AG04450 (cell line): ENCODE measurements at regions of chr1 and their contacts with region 1.

Region 1: DNA sequence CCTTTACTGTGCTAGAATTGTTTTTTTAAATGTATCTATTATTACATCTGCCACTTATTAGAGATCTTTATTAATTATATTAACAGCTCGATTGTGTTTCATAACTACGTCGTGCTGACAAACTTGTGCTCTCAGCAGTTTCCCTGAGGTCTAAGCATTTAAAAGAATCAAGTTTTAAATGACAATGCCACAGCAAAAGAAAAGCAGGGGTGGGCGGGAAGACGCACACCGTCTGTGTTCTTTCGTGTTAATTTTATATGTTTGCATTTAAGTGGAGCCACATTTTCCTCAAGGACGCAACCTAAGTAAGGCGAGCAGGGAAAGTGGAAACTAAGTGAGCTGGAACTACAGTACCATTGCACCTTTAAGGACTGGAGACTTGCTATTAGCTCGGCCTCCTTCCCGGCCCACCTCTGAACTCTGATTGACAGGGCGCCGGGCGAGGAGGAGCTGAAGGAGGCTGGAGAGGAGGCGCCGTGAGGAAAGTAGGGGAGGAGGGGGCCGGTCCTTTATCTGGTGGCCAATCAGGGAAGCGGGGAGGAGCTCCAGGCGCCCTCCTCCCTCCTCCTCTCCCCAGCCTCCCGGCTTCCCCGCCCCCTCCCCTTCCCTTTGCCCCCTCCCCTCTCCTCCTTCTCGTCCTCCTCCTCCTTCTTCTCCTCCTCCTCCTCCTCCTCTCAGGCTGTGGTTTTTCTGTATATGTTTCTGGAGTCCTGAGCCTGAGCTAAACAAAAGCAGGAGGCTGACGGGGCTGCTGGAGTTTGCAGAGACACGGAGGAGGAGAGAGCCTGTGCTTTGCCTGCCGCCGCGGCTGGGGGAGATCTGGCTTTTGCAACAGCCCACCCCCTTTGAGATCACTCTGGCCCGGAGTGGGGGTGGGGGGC is at the start of gene PBX1:
- DNase-seq: peak; percentile 95
- H3K4me3 ChIP-seq: peak within 1 kb of the TSS; percentile 76
- H3K27ac ChIP-seq: peak within 1 kb of the TSS; percentile 65
- H3K27me3 ChIP-seq: no peaks in the 10 kb centered on the region
- CTCF ChIP-seq: no peak
- polyA plus RNA-seq, gene PBX1: 46.6 and 49.9 TPM in 2 replicates

Region 2: GRCh38 chr1:164180824-164181223 is 377.9 kb before region 1 on chr1:
- CTCF ChIA-PET with region 1: no interaction called
- POLR2A ChIA-PET with region 1: no interaction called
- DNase-seq: no peak
- H3K4me3 ChIP-seq: no peak overlapping the region
- H3K27ac ChIP-seq: no peak overlapping the region
- H3K27me3 ChIP-seq: no peaks in the 10 kb centered on the region
- CTCF ChIP-seq: no peak

Region 3: GRCh38 chr1:164569866-164570265 is 11.2 kb after region 1 on chr1:
- CTCF ChIA-PET with region 1: interaction called, 4 read pairs
- POLR2A ChIA-PET with region 1: interaction called, 10 read pairs
- DNase-seq: no peak
- H3K4me3 ChIP-seq: no peak overlapping the region
- H3K27ac ChIP-seq: no peak overlapping the region
- H3K27me3 ChIP-seq: no peaks in the 10 kb centered on the region
- CTCF ChIP-seq: no peak

Region 4: DNA sequence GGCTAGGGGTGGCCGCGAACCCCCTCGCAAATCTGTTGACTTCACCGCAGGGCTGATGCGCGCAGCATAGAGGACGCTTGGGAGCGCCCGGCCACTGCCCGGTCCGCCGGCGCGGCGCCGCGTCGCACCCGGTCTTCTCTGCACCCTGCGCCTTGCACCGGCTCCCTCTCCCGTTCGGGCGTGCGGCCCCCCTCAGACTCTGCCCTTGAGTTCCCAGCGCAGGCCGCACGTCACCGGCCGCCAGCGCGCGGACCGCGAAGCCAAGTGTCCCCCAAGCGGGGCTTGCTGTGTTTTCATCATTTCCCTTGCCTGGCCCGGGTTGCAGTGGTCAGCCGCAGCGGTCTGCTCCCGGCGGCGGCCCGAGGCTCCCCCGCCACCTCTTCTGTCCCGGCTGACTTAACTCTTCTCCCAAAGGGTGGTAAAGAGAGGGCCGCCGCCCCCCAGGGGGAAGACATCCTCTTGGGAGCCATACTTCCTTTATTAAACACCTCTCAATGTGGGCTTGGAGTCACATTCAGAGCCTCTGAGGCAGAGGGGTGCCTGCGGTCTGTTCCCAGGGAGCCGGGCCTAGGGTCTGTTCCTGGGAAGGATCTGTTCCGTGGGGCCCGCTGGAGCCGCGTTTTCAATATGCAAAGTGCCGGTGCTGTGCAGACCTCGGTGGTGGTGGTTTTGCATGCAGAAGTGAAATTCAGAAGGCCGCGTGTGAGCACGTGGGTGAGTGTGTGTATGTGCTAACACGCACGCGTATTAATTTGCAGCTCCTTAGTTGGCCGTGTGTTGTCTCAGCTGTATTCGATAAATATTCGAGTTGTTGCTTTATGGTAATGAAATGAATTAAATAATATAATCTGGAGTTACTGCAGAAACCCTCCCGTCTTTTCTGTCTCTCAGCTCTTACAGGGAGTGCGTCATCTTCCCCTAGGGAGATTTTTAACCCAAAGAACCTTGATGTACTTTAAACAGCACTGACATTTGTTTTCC is 17.9 kb after region 1 on chr1:
- CTCF ChIA-PET with region 1: no interaction called
- POLR2A ChIA-PET with region 1: interaction called, 17 read pairs
- DNase-seq: peak; percentile 64
- H3K4me3 ChIP-seq: peak overlapping the region; percentile 45
- H3K27ac ChIP-seq: peak overlapping the region; percentile 91
- H3K27me3 ChIP-seq: no peaks in the 10 kb centered on the region
- CTCF ChIP-seq: no peak

Region 5: DNA sequence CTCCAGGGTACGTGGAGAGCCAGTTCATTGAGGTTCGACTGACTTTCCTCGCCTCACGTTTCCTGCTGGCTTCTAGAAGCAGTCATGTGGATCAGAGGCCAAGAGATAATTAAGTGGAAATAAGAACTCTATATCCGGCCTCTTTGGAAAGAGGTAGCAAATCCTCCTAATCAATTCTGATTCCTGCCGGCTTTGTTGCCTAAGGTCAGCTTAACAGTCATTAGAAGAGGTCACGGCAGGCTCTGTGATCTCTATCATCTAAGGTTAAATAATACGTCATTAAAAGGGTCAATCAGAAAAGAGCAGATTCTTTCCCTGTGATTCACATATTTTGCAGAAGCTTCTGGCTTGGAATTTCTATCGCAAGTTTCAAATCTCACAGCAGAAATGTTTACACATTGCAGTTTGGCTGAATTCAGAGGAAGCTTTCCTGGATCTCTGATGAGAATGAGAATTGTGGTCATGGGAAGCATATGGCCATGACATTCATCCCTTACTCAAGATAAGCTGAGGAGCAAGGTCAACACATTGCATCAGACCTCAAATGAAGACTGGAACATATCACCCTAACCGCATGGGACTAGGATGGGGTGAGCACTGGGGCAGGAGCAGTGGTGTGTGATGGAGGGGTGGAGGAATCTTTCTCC is 189.7 kb after region 1 on chr1:
- CTCF ChIA-PET with region 1: no interaction called
- POLR2A ChIA-PET with region 1: interaction called, 11 read pairs
- DNase-seq: peak; percentile 92
- H3K4me3 ChIP-seq: no peak overlapping the region
- H3K27ac ChIP-seq: peak overlapping the region; percentile 92
- H3K27me3 ChIP-seq: no peaks in the 10 kb centered on the region
- CTCF ChIP-seq: no peak